IMR-90 (cell line): ENCODE measurements at regions of chr1 and their contacts with region 1.

Region 1: GRCh38 chr1:244864253-244865027 is at the start of gene HNRNPU:
- DNase-seq: peak; percentile 97
- ATAC-seq: peak; percentile 87
- H3K4me3 ChIP-seq: peak within 1 kb of the TSS; percentile 74
- H3K27ac ChIP-seq: peak within 1 kb of the TSS; percentile 99
- H3K4me1 ChIP-seq: peaks cover 9% of the 10 kb centered on the region
- H3K27me3 ChIP-seq: no peaks in the 10 kb centered on the region
- CTCF ChIP-seq: peak; percentile 22; the same call in 1 of the 2 replicates
- POLR2A ChIP-seq: peak; percentile 97
- RAD21 ChIP-seq: peak; percentile 7; the same call in 1 of the 2 replicates
- total RNA-seq, gene HNRNPU: 151 and 343 TPM in 2 replicates

Region 2: DNA sequence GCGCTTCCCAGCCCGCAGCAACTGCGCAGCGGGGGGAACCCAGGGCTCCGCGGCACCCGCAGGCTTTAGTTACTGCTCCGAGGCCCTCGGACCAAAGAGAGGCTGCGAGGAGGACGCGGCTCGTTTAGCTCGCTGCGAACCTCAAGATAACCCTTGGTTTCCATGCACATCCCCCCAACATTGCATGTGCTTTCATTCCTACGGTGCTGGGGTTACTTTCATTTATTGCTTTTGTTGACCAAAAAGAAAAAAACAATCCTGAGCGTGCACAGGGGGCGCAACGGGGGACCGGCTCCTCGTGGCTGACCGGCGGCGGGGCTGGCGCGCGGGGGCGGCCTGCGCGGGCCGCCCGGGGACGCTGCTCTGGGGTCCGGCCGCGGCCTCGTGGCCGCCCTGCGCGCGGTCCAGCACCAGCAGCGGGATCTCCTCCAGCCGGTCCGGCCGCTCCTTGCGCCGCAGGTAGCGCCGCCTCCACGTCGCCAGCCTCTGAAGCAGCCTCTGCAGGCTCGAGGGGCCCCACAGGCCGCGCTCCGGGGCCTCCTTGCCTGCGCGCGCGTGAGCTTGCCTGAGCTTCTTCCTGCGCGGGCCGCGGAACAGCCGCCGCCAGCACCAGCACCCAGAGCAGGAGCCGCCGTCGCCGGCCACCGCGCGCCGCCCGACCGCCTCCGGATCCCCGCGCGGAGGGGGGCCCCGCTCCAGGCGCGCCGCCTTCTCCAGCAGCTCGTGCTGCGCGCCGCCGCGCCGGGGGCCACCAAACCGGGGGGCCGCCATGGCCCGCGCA is 134.1 kb before region 1 on chr1:
- CTCF ChIA-PET with region 1: no interaction called
- POLR2A ChIA-PET with region 1: no interaction called
- dilution Hi-C with region 1: no loop called
- in situ Hi-C with region 1: no loop called
- intact Hi-C with region 1: no loop called
- DNase-seq: peak; percentile 49
- ATAC-seq: peak; percentile 84
- H3K4me3 ChIP-seq: peak overlapping the region; percentile 54
- H3K27ac ChIP-seq: peak overlapping the region; percentile 24
- H3K4me1 ChIP-seq: no peaks in the 10 kb centered on the region
- H3K27me3 ChIP-seq: no peaks in the 10 kb centered on the region
- CTCF ChIP-seq: 0 out of 2 replicates have a peak, but pooled peaks have one; percentile 7
- POLR2A ChIP-seq: no peak
- RAD21 ChIP-seq: no peak

Region 3: DNA sequence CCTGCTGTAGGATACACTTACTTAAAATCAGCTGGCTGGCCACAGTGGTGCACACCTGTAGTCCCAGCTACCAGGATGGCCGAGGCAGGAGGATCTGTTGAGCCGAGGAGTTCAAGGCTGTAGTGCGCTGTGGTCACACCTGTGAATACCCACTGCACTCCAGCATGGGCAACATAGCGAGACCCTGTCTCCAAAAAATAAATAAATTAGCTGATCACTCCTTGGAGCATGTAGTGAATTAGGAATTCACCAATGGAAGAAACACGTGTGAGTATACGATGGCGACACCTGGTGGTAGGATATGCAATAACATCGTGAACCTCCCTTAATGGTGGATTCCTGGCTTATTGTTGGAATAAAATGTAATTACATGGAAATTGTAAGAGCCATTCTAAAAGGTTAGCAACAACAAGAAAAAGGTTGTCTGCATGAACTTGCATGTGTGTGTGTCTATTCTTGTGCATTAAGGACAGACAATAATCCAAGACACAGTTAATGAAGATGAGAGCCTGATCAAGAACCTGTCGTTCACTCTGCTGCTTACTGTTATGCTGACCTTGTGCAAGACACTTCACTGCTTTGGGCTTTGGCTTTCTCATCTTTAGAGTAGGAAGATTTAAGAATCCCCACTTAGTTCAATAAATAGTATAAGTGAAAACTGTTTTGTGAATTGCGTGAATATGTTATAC is 67.6 kb before region 1 on chr1:
- CTCF ChIA-PET with region 1: no interaction called
- POLR2A ChIA-PET with region 1: no interaction called
- dilution Hi-C with region 1: no loop called
- in situ Hi-C with region 1: no loop called
- intact Hi-C with region 1: loop called (anchors 1 kb)
- DNase-seq: peak; percentile 68
- ATAC-seq: peak; percentile 83
- H3K4me3 ChIP-seq: no peak overlapping the region
- H3K27ac ChIP-seq: no peak overlapping the region
- H3K4me1 ChIP-seq: peaks cover 3% of the 10 kb centered on the region
- H3K27me3 ChIP-seq: no peaks in the 10 kb centered on the region
- CTCF ChIP-seq: peak; percentile 86
- POLR2A ChIP-seq: no peak
- RAD21 ChIP-seq: peak; percentile 85

Region 4: DNA sequence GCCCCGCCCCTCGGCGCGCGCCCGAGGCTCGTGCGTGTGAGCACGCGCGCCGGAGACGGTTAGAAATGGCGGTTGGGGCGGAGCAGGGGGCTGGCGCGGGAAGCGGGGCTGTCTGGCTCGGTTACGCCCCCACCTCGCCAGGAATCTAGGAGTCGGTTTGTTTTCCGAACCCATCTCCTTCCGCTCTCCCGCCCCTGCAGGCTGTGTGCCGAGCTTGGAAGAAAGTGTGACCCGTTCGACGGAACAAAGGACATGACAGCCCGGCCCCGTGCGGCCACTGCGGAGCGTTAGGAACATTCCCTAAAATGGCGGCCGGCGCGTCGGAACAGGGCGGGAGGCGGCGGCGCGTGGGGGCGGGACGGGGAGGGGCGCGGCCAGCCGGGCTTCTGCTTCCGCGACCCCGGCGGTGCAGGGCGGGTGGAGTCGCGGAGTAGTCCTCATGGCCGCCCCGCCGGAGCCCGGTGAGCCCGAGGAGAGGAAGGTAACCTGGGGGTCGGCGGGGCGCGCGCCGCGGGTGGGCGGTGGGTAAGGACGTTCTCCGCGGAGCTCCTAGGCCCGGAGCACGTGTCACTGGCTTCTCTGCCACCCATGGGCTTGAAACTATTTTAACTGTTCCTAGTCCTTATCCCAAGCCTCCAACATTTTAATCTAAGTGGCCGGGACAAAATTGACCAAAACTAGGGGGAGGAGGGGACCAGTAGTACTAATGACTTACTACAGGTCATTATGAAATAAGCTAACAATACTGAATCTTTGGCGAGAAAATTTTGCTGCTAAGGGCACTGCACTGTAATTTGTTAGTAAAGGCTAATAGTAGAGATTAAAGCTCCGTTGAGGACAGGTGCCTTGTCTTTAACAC is 28.9 kb before region 1 on chr1 and contains the start of gene COX20:
- CTCF ChIA-PET with region 1: interaction called, 6 read pairs
- POLR2A ChIA-PET with region 1: no interaction called
- dilution Hi-C with region 1: no loop called
- in situ Hi-C with region 1: no loop called
- intact Hi-C with region 1: loop called (anchors 1 kb)
- DNase-seq: peak; percentile 88
- ATAC-seq: peak; percentile 75
- H3K4me3 ChIP-seq: peak within 1 kb of the TSS; percentile 68
- H3K27ac ChIP-seq: peak within 1 kb of the TSS; percentile 97
- H3K4me1 ChIP-seq: peaks cover 5% of the 10 kb centered on the region
- H3K27me3 ChIP-seq: no peaks in the 10 kb centered on the region
- CTCF ChIP-seq: no peak
- POLR2A ChIP-seq: peak; percentile 86
- RAD21 ChIP-seq: no peak
- total RNA-seq, gene COX20: 13.3 and 26.9 TPM in 2 replicates

Region 5: DNA sequence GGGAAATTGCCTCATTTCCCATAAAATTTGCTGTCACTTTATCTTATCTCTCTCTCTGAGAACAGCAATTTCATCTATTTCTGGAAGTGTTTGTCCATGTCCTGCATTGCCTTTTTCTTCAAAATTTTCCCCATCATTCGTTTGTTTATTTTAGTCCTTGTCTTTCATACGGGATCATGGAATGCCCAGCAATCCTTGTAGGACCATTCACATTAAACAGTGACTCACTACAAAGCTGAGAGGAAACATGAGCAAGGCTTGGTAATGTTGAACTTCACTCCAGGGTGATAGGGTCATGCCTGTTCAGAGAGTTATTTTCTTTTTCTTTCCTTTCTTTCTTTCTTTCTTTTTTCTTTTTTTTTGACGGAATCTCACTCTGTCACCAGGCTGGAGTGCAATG is 32.1 kb after region 1 on chr1:
- CTCF ChIA-PET with region 1: no interaction called
- POLR2A ChIA-PET with region 1: no interaction called
- dilution Hi-C with region 1: no loop called
- in situ Hi-C with region 1: no loop called
- intact Hi-C with region 1: loop called (anchors 2 kb)
- DNase-seq: peak; percentile 94
- ATAC-seq: peak; percentile 92
- H3K4me3 ChIP-seq: no peak overlapping the region
- H3K27ac ChIP-seq: peak overlapping the region; percentile 88; the same call in 1 of the 2 replicates
- H3K4me1 ChIP-seq: 0 out of 2 replicates have a peak, but pooled peaks cover 2% of the 10 kb centered on the region
- H3K27me3 ChIP-seq: no peaks in the 10 kb centered on the region
- CTCF ChIP-seq: no peak
- POLR2A ChIP-seq: no peak
- RAD21 ChIP-seq: no peak

Region 6: DNA sequence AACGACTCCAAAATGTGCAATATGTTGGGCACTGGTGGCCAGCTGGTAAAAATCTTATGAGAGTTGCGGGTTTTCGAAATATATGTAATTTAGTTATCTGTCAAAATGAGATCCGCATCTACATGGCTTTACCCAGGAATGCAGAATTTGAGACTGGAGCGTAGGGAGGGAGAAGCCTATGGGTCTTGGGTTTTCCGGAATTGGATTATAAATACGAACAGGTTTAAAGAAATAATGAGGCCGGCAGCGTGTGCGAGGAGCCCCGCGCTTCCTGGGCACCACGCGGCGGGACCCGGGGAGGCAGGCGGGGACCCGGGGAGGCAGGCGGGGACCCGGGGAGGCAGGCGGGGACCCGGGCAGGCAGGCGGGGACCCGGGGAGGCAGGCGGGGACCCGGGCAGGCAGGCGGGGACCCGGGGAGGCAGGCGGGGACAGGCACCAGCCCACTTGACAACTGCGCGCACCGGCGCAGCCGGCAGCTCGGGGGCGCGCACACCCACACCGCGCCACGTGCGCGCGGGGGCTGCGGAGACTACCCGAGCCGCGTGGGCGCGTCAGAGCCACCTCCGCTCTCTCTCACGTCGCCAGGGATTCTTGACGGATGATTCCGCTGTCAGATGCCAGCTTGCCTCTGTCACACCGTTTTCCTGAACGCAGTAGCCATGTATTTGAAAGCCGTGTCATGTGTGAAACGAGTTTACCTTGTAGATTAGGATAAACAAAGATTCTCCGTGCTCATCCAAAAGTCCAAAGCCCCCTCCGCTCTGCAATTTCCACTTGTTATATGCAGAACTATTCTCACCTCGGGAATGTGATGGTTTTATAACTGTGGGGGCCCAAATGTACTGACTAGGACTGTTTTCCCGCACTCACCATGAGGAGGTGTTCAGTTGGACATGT is 54.2 kb after region 1 on chr1:
- CTCF ChIA-PET with region 1: no interaction called
- POLR2A ChIA-PET with region 1: no interaction called
- dilution Hi-C with region 1: no loop called
- in situ Hi-C with region 1: no loop called
- intact Hi-C with region 1: loop called (anchors 2 kb)
- DNase-seq: peak; percentile 12
- ATAC-seq: peak; percentile 82
- H3K4me3 ChIP-seq: peak overlapping the region; percentile 52
- H3K27ac ChIP-seq: no peak overlapping the region
- H3K4me1 ChIP-seq: no peaks in the 10 kb centered on the region
- H3K27me3 ChIP-seq: no peaks in the 10 kb centered on the region; the same call in 1 of the 2 replicates
- CTCF ChIP-seq: no peak
- POLR2A ChIP-seq: no peak
- RAD21 ChIP-seq: no peak

Region 7: DNA sequence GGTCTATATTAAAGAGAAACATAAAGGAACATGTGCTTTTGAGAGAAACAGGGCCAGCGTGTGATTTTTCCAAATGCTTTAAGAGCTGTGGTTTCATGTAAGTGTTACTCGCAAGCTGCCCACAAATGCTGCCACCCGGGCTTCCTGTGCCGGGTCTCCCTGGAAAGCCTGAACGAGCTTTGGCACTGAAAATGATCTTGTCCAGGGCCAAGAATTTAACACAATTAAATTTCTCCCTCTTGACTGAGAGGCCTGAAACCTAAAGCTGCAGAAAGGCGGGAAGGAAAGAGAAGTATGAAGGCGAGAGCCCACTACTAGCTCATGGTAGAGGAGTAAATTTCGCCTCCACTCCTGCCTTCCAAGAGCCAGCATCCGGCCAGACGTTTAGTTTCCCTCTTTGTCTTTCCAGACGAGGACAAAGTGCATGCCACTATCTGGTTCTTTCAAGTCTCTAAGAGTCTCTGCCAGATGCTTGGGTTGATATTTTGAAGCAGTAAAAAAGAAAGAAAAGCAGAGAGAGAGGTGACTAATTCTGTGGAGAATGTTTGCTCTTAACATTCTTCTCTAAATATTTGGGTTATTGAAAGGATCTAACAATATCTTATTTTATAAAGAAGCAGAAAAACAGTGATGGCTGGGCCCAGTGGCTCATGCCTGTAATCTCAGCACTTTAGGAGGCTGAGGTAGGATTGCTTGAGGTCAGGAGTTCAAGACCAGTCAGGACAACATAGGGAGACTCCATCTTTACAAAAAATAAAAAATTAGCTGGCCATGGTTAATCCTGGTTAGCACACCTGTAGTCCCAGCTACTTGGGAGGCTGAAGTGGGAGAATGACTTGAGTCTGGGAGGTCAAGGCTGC is 99.9 kb after region 1 on chr1:
- CTCF ChIA-PET with region 1: interaction called, 3 read pairs
- POLR2A ChIA-PET with region 1: interaction called, 14 read pairs
- dilution Hi-C with region 1: no loop called
- in situ Hi-C with region 1: no loop called
- intact Hi-C with region 1: loop called (anchors 1 kb)
- DNase-seq: peak; percentile 90
- ATAC-seq: peak; percentile 85
- H3K4me3 ChIP-seq: peak overlapping the region; percentile 1; the same call in 1 of the 2 replicates
- H3K27ac ChIP-seq: peak overlapping the region; percentile 90
- H3K4me1 ChIP-seq: peaks cover 18% of the 10 kb centered on the region
- H3K27me3 ChIP-seq: no peaks in the 10 kb centered on the region
- CTCF ChIP-seq: no peak
- POLR2A ChIP-seq: no peak
- RAD21 ChIP-seq: no peak

Region 8: GRCh38 chr1:244970661-244971551 is 106.5 kb after region 1 on chr1:
- CTCF ChIA-PET with region 1: no interaction called
- POLR2A ChIA-PET with region 1: no interaction called
- dilution Hi-C with region 1: no loop called
- in situ Hi-C with region 1: no loop called
- intact Hi-C with region 1: loop called (anchors 1 kb)
- DNase-seq: peak; percentile 95
- ATAC-seq: peak; percentile 89
- H3K4me3 ChIP-seq: peak overlapping the region; percentile 63
- H3K27ac ChIP-seq: peak overlapping the region; percentile 98
- H3K4me1 ChIP-seq: peaks cover 7% of the 10 kb centered on the region
- H3K27me3 ChIP-seq: no peaks in the 10 kb centered on the region
- CTCF ChIP-seq: peak; percentile 65
- POLR2A ChIP-seq: peak; percentile 75
- RAD21 ChIP-seq: peak; percentile 43; the same call in 1 of the 2 replicates

Region 9: DNA sequence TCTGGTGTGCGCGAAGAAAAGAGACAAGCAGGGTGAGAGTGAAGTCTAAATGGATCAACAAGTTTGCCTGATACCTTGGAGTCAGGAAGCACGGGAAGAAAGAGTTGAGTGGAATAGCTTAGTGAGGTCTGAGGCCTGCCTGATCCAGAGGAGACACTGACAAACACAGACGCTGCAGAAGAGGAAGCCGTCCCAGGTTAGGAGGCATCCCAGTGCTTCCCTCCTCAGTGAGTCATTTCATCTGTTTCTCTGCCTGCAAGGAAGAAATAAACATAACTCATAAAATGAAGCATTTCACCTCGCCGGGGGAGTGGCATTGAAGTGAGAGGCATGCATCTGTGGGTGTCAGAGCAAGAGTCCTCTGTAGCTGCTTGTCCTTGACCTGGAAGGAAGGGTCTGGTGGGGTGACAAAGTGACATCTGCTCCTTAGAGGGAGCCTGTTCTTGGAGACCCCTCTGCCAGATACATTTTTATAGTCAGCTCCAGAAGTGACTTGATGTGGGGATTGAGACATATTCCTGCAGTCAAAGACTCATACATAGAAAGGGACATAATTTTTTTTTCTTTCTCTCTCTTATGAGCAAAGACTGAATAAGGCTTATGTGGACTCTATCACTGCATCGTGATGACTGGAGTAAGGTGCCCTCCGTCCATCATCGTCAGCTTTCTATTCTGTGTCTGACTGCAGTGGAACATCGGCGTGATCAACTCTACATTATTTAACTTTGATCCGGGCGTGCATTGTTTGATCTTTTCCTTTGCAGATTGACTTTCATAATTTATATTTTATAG is 547.0 kb after region 1 on chr1:
- CTCF ChIA-PET with region 1: no interaction called
- POLR2A ChIA-PET with region 1: no interaction called
- dilution Hi-C with region 1: no loop called
- in situ Hi-C with region 1: no loop called
- intact Hi-C with region 1: no loop called
- DNase-seq: peak; percentile 75
- ATAC-seq: peak; percentile 98
- H3K4me3 ChIP-seq: no peak overlapping the region
- H3K27ac ChIP-seq: peak overlapping the region; percentile 52
- H3K4me1 ChIP-seq: peaks cover 6% of the 10 kb centered on the region
- H3K27me3 ChIP-seq: no peaks in the 10 kb centered on the region
- CTCF ChIP-seq: no peak
- POLR2A ChIP-seq: no peak
- RAD21 ChIP-seq: no peak